Lower lobe of right lung (tissue), 2 donors: ENCODE measurements at regions of chr3 and their contacts with region 1.

Region 1: DNA sequence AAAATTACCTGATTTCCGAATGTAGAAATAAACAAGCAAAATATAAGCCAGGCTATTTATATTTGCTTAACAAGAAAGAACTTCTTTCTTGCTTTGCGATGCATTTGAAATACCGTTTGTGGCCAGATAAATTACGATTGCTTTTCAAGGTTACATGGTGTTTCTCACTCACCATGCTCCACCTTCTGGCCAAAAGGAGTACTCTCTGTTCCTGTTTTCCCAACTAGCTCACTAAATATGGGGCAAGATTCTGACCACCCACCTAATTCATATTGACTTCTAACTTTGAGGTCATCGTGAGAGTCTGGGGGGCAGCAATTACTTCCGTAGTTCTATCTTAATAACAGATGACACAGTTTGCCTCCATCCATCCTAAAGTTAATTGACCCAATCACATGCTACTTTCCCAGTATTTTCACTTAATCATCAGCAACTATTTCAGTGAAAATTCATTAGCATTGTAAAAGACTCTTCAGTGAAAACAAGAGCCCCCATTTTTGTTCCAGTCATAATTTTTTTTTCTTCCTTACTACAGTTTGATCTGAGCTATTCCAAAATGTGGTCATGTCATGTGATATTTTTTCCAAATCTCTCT is 25.9 kb downstream of the ACP3 start:
- DNase-seq: no peak
- ATAC-seq: peak; percentile 75 to 91
- H3K4me3 ChIP-seq: peak overlapping the region; percentile 10
- H3K27ac ChIP-seq: no peak overlapping the region
- H3K4me1 ChIP-seq: peaks cover 27% of the 10 kb centered on the region
- H3K27me3 ChIP-seq: no peaks in the 10 kb centered on the region
- CTCF ChIP-seq: peak; percentile 76

Region 2: GRCh38 chr3:132253262-132253878 is 89.7 kb before region 1 on chr3:
- intact Hi-C with region 1: loop called (anchors 5 kb)
- DNase-seq: no peak
- ATAC-seq: peak; percentile 63 to 76
- H3K4me3 ChIP-seq: no peak overlapping the region
- H3K27ac ChIP-seq: no peak overlapping the region
- H3K4me1 ChIP-seq: no peaks in the 10 kb centered on the region
- H3K27me3 ChIP-seq: no peaks in the 10 kb centered on the region
- CTCF ChIP-seq: peak; percentile 73